HCT116 (cell line): ENCODE measurements at regions of chr1 and their contacts with region 1.

Region 1: GRCh38 chr1:151156515-151156819 is at the start of gene TNFAIP8L2:
- DNase-seq: no peak
- ATAC-seq: peak; percentile 82
- H3K4me3 ChIP-seq: no peak within 1 kb of the TSS
- H3K27ac ChIP-seq: no peak within 1 kb of the TSS
- H3K4me1 ChIP-seq: peaks cover 2 to 6% of the 10 kb centered on the region in 2 experiments; a peak in 3 of 4 replicates
- H3K27me3 ChIP-seq: no peaks in the 10 kb centered on the region
- CTCF ChIP-seq: no peak
- POLR2A ChIP-seq: no peak
- RAD21 ChIP-seq: no peak
- total RNA-seq, gene TNFAIP8L2: not detected

Region 2: DNA sequence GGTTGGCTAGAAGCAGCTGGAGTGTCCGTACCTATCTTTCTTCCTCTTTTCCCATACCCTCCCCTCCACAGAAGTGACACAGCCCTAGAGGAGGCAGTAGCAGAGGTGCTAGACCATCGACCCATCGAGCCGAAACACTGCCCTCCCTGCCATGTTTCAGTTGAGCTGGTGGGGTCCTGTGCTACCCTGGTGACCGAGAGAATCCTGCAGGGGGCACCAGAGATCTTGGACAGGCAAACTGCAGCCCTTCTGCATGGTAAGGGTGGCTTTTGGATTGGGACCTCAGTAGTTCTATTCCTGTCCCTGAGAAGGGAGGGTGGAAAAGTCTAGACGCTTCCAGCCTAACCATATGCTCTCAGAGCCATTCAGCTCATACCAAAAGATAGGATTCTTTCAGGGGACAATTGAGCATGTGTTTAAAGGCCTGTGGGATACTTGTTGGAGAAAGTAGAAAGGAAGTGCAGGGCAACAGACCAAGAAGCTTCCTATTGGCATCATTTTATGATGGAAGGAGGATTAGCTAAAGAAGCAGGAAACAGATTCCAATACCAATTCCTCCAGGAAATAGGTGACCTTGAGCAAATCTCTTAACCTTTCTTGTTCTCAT is 131.8 kb before region 1 on chr1:
- CTCF ChIA-PET with region 1: interaction called, 4 read pairs
- POLR2A ChIA-PET with region 1: no interaction called
- RAD21 ChIA-PET with region 1: no interaction called
- intact Hi-C with region 1: loop called (anchors 1 kb)
- DNase-seq: peak; percentile 46
- ATAC-seq: peak; percentile 99
- H3K4me3 ChIP-seq: no peak overlapping the region
- H3K27ac ChIP-seq: no peak overlapping the region
- H3K4me1 ChIP-seq: no peaks in the 10 kb centered on the region
- H3K27me3 ChIP-seq: no peaks in the 10 kb centered on the region
- CTCF ChIP-seq: peak; percentile 67 to 75 (median 74)
- POLR2A ChIP-seq: no peak
- RAD21 ChIP-seq: peak; percentile 81

Region 3: DNA sequence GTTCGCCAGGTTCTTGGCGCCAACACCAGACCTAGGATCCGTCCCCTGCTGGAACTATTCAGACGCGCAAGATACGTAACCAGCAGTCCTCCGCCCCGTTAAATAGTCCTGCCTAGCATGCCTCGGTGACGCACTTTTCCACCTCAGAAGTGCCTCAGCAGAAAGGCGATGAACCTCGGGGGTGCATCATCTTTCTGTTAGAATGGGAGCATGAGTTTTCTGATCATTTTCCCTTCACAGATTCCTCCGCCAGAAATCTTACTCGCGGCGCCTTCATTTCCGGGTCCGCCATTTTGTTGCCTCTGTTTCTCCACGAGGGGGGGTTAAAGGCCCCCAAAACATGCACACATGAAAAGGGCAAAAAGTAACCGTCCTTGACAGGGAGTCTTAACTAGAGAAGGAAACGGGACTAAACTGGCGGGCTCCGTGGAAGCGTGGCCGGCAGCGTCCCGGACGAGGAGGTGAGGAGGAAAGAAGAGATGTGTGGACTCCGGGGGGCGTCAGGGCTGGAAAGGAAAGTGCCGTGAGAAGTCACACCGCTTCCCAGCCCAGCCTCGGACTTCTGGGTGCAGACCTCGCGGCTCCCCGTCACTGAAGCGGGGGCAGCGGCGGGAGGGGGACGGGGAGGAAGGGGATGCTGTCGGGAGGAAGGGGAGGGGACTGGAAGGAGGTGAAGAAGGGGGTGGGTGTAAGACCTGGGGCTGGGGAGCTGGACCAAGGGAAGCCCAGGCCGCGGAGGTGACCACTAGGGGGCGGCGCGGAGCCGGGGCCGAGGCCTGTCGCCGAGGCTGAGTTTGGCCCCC is 85.8 kb before region 1 on chr1 and contains the start of gene GABPB2:
- CTCF ChIA-PET with region 1: interaction called, 3 read pairs
- POLR2A ChIA-PET with region 1: no interaction called
- RAD21 ChIA-PET with region 1: interaction called in 1 of 2 experiments, 3 read pairs
- intact Hi-C with region 1: loop called (anchors 1 kb)
- DNase-seq: peak; percentile 91
- ATAC-seq: peak; percentile 90
- H3K4me3 ChIP-seq: peak within 1 kb of the TSS; percentile 74 to 78
- H3K27ac ChIP-seq: peak within 1 kb of the TSS; percentile 98
- H3K4me1 ChIP-seq: peaks cover 22 to 32% of the 10 kb centered on the region in 2 experiments
- H3K27me3 ChIP-seq: no peaks in the 10 kb centered on the region
- CTCF ChIP-seq: peak; percentile 50 to 89 (median 87); a peak in 5 of 6 replicates
- POLR2A ChIP-seq: peak; percentile 92
- RAD21 ChIP-seq: peak; percentile 62
- total RNA-seq, gene GABPB2: 7.7 TPM

Region 4: DNA sequence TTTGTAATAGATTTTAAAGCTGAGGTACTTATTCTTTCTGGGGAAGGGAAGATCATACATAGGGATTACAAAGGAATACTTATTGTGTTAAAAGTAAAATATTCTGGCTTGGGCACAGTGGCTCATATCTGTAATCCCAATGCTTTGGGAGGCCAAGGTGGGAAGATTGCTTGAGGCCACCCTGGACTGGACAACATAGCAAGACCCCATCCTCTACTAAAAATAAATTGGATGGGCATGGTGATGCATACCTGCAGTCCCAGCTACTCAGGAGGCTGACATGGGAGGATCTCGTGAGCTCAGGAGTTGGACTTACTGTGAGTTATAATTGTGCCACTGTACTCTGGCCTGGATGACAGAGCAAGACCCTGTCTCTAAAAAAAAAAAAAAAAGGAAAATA is 58.3 kb before region 1 on chr1:
- CTCF ChIA-PET with region 1: interaction called, 63 read pairs
- POLR2A ChIA-PET with region 1: interaction called, 3 read pairs
- RAD21 ChIA-PET with region 1: interaction called, 3 to 4 read pairs
- intact Hi-C with region 1: loop called (anchors 1 kb)
- DNase-seq: no peak
- ATAC-seq: no peak
- H3K4me3 ChIP-seq: no peak overlapping the region
- H3K27ac ChIP-seq: no peak overlapping the region
- H3K4me1 ChIP-seq: peaks cover 7 to 13% of the 10 kb centered on the region in 2 experiments
- H3K27me3 ChIP-seq: no peaks in the 10 kb centered on the region
- CTCF ChIP-seq: no peak
- POLR2A ChIP-seq: no peak
- RAD21 ChIP-seq: no peak

Region 5: GRCh38 chr1:151106894-151107293 is 49.6 kb before region 1 on chr1:
- CTCF ChIA-PET with region 1: interaction called, 63 read pairs
- POLR2A ChIA-PET with region 1: interaction called, 3 read pairs
- RAD21 ChIA-PET with region 1: interaction called in 1 of 2 experiments, 3 read pairs
- intact Hi-C with region 1: no loop called
- DNase-seq: no peak
- ATAC-seq: no peak
- H3K4me3 ChIP-seq: no peak overlapping the region
- H3K27ac ChIP-seq: no peak overlapping the region
- H3K4me1 ChIP-seq: peaks cover 15% of the 10 kb centered on the region in 2 experiments; a peak in 3 of 4 replicates
- H3K27me3 ChIP-seq: no peaks in the 10 kb centered on the region
- CTCF ChIP-seq: no peak
- POLR2A ChIP-seq: no peak
- RAD21 ChIP-seq: no peak